Gastrocnemius medialis (tissue), 4 donors: ENCODE measurements at regions of chr15 and their contacts with region 1.

Region 1: GRCh38 chr15:101641166-101641764 is 10.9 kb downstream of the TM2D3 start:
- DNase-seq: peak in 1 of 2 donors; percentile 61
- ATAC-seq: peak; percentile 69 to 78
- H3K4me3 ChIP-seq: peak overlapping the region in 2 of 4 donors; percentile 8 to 18
- H3K27ac ChIP-seq: peak overlapping the region; percentile 54 to 77 (median 65)
- H3K4me1 ChIP-seq: peaks cover 10 to 11% of the 10 kb centered on the region in 2 donors
- H3K27me3 ChIP-seq: no peaks in the 10 kb centered on the region
- CTCF ChIP-seq: peak; percentile 88 to 97 (median 93)
- POLR2A ChIP-seq: no peak

Region 2: GRCh38 chr15:101294731-101295606 is 346.3 kb before region 1 on chr15 and contains the start of gene SNRPA1:
- in situ Hi-C with region 1: loop called in 3 of 4 experiments (anchors 5 to 10 kb)
- intact Hi-C with region 1: no loop called
- DNase-seq: peak; percentile 96 to 97
- ATAC-seq: peak; percentile 90 to 93
- H3K4me3 ChIP-seq: peak within 1 kb of the TSS; percentile 71 to 99 (median 92)
- H3K27ac ChIP-seq: peak within 1 kb of the TSS; percentile 93 to 99 (median 98)
- H3K4me1 ChIP-seq: peaks cover 30 to 37% of the 10 kb centered on the region in 2 donors
- H3K27me3 ChIP-seq: no peaks in the 10 kb centered on the region
- CTCF ChIP-seq: peak in 2 of 5 experiments; percentile 5 to 22
- POLR2A ChIP-seq: peak; percentile 82 to 92
- total RNA-seq, gene SNRPA1: 19.6 to 59.1 (median 26.2) TPM

Region 3: GRCh38 chr15:101451266-101451799 is 189.9 kb before region 1 on chr15:
- in situ Hi-C with region 1: no loop called
- intact Hi-C with region 1: loop called (anchors 10 kb)
- DNase-seq: peak in 1 of 2 donors; percentile 48
- ATAC-seq: no peak
- H3K4me3 ChIP-seq: peak overlapping the region in 2 of 4 donors; percentile 12 to 19
- H3K27ac ChIP-seq: peak overlapping the region; percentile 7 to 94 (median 48)
- H3K4me1 ChIP-seq: peaks cover 42 to 50% of the 10 kb centered on the region in 2 donors
- H3K27me3 ChIP-seq: no peaks in the 10 kb centered on the region
- CTCF ChIP-seq: no peak
- POLR2A ChIP-seq: no peak

Region 4: GRCh38 chr15:101540480-101541239 is 100.6 kb before region 1 on chr15:
- in situ Hi-C with region 1: no loop called
- intact Hi-C with region 1: loop called (anchors 1 kb)
- DNase-seq: no peak
- ATAC-seq: peak; percentile 53 to 58
- H3K4me3 ChIP-seq: no peak overlapping the region
- H3K27ac ChIP-seq: no peak overlapping the region
- H3K4me1 ChIP-seq: no peaks in the 10 kb centered on the region
- H3K27me3 ChIP-seq: peaks cover 2 to 18% (median 15%) of the 10 kb centered on the region in 3 donors
- CTCF ChIP-seq: peak in 3 of 5 experiments; percentile 24 to 54 (median 48)
- POLR2A ChIP-seq: no peak

Region 5: GRCh38 chr15:101615986-101616848 is 25.0 kb before region 1 on chr15:
- in situ Hi-C with region 1: no loop called
- intact Hi-C with region 1: loop called (anchors 2 kb)
- DNase-seq: peak in 1 of 2 donors; percentile 73
- ATAC-seq: peak; percentile 14 to 26
- H3K4me3 ChIP-seq: peak overlapping the region in 3 of 4 donors; percentile 1 to 20 (median 6)
- H3K27ac ChIP-seq: peak overlapping the region; percentile 79 to 92 (median 81)
- H3K4me1 ChIP-seq: peaks cover 84 to 95% of the 10 kb centered on the region in 2 donors
- H3K27me3 ChIP-seq: no peaks in the 10 kb centered on the region
- CTCF ChIP-seq: no peak
- POLR2A ChIP-seq: no peak